ENCODE measurements at regions of chr14 and their contacts with region 1.

Region 1: GRCh38 chr14:24299255-24300195 is at the starts of genes DHRS1 and NOP9:
- DNase-seq: peak; percentile 94
- H3K4me3 Mint-ChIP-seq: peak within 1 kb of the TSS; percentile 84
- H3K27ac Mint-ChIP-seq: peak within 1 kb of the TSS; percentile 84
- H3K4me1 Mint-ChIP-seq: peaks cover 60% of the 10 kb centered on the region
- H3K27me3 Mint-ChIP-seq: no peaks in the 10 kb centered on the region
- total RNA-seq, gene DHRS1: 31.6 to 33.4 TPM
- total RNA-seq, gene NOP9: 25.8 to 27.7 TPM

Region 2: GRCh38 chr14:24195191-24196070 is 104.1 kb before region 1 on chr14 and contains the start of gene TM9SF1:
- CTCF ChIA-PET with region 1: interaction called, 11 read pairs
- POLR2A ChIA-PET with region 1: interaction called, 6 read pairs
- DNase-seq: peak; percentile 90
- H3K4me3 Mint-ChIP-seq: peak within 1 kb of the TSS; percentile 96
- H3K27ac Mint-ChIP-seq: peak within 1 kb of the TSS; percentile 95
- H3K4me1 Mint-ChIP-seq: peaks cover 64% of the 10 kb centered on the region
- H3K27me3 Mint-ChIP-seq: no peaks in the 10 kb centered on the region
- total RNA-seq, gene TM9SF1: 30.8 to 35.1 TPM

Region 3: DNA sequence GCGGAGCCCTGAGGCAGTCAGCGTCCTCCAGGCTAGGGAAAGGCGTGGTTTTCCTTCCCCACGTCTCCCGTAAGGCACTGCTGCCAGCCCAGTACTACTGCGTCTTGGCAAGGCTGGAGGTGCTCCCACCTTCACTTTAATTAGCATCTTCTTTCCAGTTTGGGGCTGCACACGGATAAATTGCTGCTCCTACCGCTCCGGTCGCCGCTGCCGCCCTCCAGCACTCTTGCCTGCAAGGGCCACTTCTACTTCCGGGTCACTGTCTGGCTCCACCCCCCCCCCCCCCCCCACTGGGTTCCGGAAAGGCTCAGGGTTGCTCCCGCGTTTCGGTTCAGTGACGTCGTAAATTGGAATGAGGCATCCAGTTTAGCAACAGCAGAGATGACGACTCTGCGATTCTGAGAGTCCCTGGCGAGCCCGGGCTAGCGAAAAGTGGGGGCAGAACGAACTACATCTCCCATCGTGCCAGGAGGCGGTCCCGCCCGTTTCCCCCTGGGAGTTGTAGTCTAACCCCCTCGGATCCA is 67.3 kb before region 1 on chr14 and contains the start of gene NEDD8:
- CTCF ChIA-PET with region 1: interaction called, 23 read pairs
- POLR2A ChIA-PET with region 1: interaction called, 3 read pairs
- DNase-seq: peak; percentile 92
- H3K4me3 Mint-ChIP-seq: peak within 1 kb of the TSS; percentile 81
- H3K27ac Mint-ChIP-seq: peak within 1 kb of the TSS; percentile 83
- H3K4me1 Mint-ChIP-seq: peaks cover 59% of the 10 kb centered on the region
- H3K27me3 Mint-ChIP-seq: no peaks in the 10 kb centered on the region
- total RNA-seq, gene NEDD8: 190 to 197 TPM

Region 4: GRCh38 chr14:24251880-24252288 is 47.6 kb before region 1 on chr14:
- CTCF ChIA-PET with region 1: interaction called, 213 read pairs
- POLR2A ChIA-PET with region 1: interaction called, 46 read pairs
- DNase-seq: no peak
- H3K4me3 Mint-ChIP-seq: no peak overlapping the region
- H3K27ac Mint-ChIP-seq: no peak overlapping the region
- H3K4me1 Mint-ChIP-seq: peaks cover 43% of the 10 kb centered on the region
- H3K27me3 Mint-ChIP-seq: no peaks in the 10 kb centered on the region

Region 5: DNA sequence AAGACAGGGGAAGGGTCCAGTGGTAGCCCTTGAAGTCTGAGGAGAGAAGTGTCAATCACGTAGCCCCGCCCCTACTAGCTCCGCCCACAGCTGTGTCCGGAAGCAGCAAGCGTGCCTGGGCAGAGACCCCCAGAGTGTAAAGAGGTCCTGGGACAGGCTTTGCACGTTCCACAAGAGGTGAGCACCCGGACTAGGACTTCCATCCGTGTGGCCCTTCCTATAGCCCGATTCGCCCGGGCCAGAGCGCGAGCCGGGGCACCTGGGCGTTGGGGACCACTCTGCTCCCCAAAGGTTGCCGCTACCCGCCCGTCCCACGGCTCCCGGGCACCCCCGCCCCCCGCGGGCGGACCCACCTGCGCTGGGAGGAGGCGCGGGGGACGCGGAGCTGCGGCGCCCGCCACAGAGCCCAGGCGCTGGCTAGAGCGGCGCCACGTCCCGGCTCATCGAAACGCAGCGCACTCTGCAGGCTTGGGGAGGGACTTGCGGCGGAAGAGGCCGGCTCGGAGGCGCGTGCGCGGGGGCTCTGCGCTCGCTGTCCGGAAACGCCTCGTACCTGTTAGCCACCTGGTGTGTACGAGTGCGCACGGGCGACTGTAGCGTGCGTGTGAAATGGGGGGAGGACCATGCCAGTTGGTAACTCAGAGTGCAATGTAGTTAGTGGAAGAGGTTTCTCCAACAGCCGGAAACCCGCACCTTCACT is 28.2 kb before region 1 on chr14 and contains the start of gene RABGGTA:
- CTCF ChIA-PET with region 1: interaction called, 39 read pairs
- POLR2A ChIA-PET with region 1: interaction called, 32 read pairs
- DNase-seq: peak; percentile 90
- H3K4me3 Mint-ChIP-seq: peak within 1 kb of the TSS; percentile 86
- H3K27ac Mint-ChIP-seq: peak within 1 kb of the TSS; percentile 92
- H3K4me1 Mint-ChIP-seq: peaks cover 43% of the 10 kb centered on the region
- H3K27me3 Mint-ChIP-seq: no peaks in the 10 kb centered on the region
- total RNA-seq, gene RABGGTA: 40.2 to 41.0 TPM

Region 6: GRCh38 chr14:24279301-24280186 is 20.0 kb before region 1 on chr14:
- CTCF ChIA-PET with region 1: interaction called, 24 read pairs
- POLR2A ChIA-PET with region 1: interaction called, 7 read pairs
- DNase-seq: peak; percentile 50
- H3K4me3 Mint-ChIP-seq: no peak overlapping the region
- H3K27ac Mint-ChIP-seq: no peak overlapping the region
- H3K4me1 Mint-ChIP-seq: peaks cover 25% of the 10 kb centered on the region
- H3K27me3 Mint-ChIP-seq: peaks cover 5% of the 10 kb centered on the region

Region 7: DNA sequence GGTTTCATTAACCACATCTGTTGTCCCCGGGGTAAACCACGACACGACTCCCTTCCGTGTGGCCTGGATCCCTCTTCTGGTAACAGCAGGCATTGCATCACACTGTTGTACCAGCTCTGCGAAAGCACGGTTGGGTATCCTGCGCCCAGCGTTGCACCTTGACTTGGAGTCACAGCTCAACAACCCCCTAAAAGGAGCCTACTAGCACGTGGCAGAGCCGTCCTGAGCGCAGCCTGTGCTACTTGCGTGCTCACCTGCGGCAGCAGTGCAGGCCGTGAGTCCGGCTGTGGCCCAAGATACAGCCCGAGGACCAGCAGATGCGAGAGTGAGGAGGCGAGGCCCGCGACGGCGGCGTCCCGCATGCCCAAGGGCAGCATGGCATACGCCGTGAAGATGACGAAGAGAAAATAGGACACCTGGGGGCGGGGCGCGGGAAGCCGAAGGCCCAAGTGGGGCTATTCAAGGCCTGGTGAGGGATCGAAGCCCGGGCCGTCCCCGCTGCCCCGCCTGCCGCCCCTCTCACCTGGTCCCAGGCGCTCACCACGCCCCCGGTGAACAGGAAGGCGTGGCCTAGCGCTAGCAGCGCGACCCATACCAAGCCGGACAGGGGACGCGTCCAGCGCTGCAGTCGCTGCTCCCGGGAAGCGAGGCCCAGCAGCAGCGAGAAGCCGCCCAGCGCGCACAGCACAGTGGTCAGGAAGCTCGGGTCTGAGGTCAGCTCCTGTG is 32.9 kb after region 1 on chr14:
- CTCF ChIA-PET with region 1: interaction called, 34 read pairs
- POLR2A ChIA-PET with region 1: interaction called, 5 read pairs
- DNase-seq: peak; percentile 89
- H3K4me3 Mint-ChIP-seq: peak overlapping the region; percentile 71
- H3K27ac Mint-ChIP-seq: peak overlapping the region; percentile 61
- H3K4me1 Mint-ChIP-seq: peaks cover 81% of the 10 kb centered on the region
- H3K27me3 Mint-ChIP-seq: peaks cover 35% of the 10 kb centered on the region